AG04450 (cell line): ENCODE measurements at regions of chr12 and their contacts with region 1.

Region 1: GRCh38 chr12:119911182-119911581 is 34.1 kb upstream of the CIT start:
- DNase-seq: peak; percentile 62
- H3K4me3 ChIP-seq: no peak overlapping the region
- H3K27ac ChIP-seq: no peak overlapping the region
- H3K27me3 ChIP-seq: peaks cover 2% of the 10 kb centered on the region
- CTCF ChIP-seq: no peak

Region 2: GRCh38 chr12:119938049-119938667 is 27.0 kb after region 1 on chr12:
- CTCF ChIA-PET with region 1: interaction called, 11 read pairs
- POLR2A ChIA-PET with region 1: no interaction called
- DNase-seq: peak; percentile 10
- H3K4me3 ChIP-seq: no peak overlapping the region
- H3K27ac ChIP-seq: no peak overlapping the region
- H3K27me3 ChIP-seq: peaks cover 3% of the 10 kb centered on the region
- CTCF ChIP-seq: peak; percentile 88

Region 3: DNA sequence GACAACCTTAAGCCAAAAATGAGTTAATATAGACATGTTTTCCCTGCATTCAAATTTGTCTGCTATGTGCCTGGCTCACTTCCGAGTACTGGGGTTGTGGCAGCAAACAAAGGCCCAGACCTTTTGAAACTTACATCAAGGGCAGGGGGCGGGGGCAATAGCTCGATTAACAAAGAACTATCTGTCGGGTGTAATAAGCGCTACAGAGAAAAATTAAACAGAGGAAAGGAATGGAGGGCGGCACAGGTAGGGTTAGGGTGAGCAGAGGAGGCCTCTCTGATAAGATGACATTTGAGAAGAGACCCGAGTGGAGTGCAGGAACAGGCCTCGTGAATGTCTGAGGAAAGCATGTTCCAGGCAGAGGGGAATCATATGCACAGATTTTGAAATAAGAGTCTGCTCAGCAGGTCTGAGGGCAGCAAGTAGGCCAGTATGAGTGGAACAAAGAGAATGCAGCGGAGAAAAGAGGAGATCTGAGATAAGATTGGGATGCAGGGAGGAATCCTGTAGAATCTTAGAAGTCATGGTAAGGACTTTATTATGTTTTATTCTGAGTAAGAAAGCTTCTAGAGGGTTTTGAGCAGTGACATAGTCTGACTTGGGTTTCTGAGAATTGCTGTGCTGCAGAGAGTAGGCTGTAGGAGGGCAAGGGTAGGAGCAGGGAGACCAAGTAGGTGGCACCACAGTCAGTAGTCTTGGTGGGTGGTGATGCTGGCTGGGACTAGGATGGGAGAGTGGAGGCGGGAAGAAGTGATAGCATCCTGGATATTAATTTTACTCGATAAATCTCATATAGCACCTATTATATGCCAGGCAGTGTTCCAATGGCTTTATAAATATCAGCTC is 130.4 kb after region 1 on chr12:
- CTCF ChIA-PET with region 1: no interaction called
- POLR2A ChIA-PET with region 1: no interaction called
- DNase-seq: no peak
- H3K4me3 ChIP-seq: no peak overlapping the region
- H3K27ac ChIP-seq: no peak overlapping the region
- H3K27me3 ChIP-seq: peaks cover 2% of the 10 kb centered on the region
- CTCF ChIP-seq: no peak